PC-9 (cell line): ENCODE measurements at regions of chr19 and their contacts with region 1.

Region 1: GRCh38 chr19:45003485-45003884 is 2.2 kb downstream of the RELB start:
- DNase-seq: no peak
- H3K4me3 ChIP-seq: no peak overlapping the region
- H3K27ac ChIP-seq: no peak overlapping the region
- H3K4me1 ChIP-seq: peaks cover 7% of the 10 kb centered on the region
- H3K27me3 ChIP-seq: no peaks in the 10 kb centered on the region
- CTCF ChIP-seq: no peak

Region 2: GRCh38 chr19:44960906-44961728 is 42.4 kb before region 1 on chr19:
- CTCF ChIA-PET with region 1: no interaction called
- POLR2A ChIA-PET with region 1: no interaction called
- intact Hi-C with region 1: no loop called
- DNase-seq: no peak
- H3K4me3 ChIP-seq: no peak overlapping the region
- H3K27ac ChIP-seq: no peak overlapping the region
- H3K4me1 ChIP-seq: peaks cover 12% of the 10 kb centered on the region
- H3K27me3 ChIP-seq: no peaks in the 10 kb centered on the region
- CTCF ChIP-seq: no peak

Region 3: GRCh38 chr19:44988896-44989556 is 14.5 kb before region 1 on chr19:
- CTCF ChIA-PET with region 1: no interaction called
- POLR2A ChIA-PET with region 1: interaction called, 13 read pairs
- intact Hi-C with region 1: no loop called
- DNase-seq: peak; percentile 38 to 49
- H3K4me3 ChIP-seq: no peak overlapping the region
- H3K27ac ChIP-seq: no peak overlapping the region
- H3K4me1 ChIP-seq: no peaks in the 10 kb centered on the region
- H3K27me3 ChIP-seq: no peaks in the 10 kb centered on the region
- CTCF ChIP-seq: peak; percentile 78